IMR-90 (cell line): ENCODE measurements at regions of chr3 and their contacts with region 1.

Region 1: DNA sequence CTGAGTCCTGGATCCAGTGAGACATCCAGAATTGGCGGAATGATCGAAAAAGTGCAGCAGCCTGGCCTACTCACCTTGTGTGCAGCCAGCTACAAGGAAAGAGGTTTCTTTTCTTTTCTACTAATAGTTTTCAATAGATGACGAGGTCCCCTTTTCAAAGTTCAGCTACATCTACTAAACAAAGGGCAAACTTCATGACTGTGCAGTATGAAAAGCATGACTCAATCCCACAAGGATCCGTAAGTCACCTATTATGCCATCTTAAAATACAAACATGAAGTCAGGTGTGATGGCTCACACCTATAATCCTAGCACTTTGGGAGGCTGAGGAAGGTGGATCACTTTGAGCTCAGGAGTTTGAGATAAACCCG is 16.7 kb downstream of the MIX23 start:
- DNase-seq: peak; percentile 2
- ATAC-seq: no peak
- H3K4me3 ChIP-seq: no peak overlapping the region
- H3K27ac ChIP-seq: no peak overlapping the region
- H3K4me1 ChIP-seq: peaks cover 5% of the 10 kb centered on the region
- H3K27me3 ChIP-seq: no peaks in the 10 kb centered on the region
- CTCF ChIP-seq: no peak
- POLR2A ChIP-seq: no peak
- RAD21 ChIP-seq: no peak

Region 2: DNA sequence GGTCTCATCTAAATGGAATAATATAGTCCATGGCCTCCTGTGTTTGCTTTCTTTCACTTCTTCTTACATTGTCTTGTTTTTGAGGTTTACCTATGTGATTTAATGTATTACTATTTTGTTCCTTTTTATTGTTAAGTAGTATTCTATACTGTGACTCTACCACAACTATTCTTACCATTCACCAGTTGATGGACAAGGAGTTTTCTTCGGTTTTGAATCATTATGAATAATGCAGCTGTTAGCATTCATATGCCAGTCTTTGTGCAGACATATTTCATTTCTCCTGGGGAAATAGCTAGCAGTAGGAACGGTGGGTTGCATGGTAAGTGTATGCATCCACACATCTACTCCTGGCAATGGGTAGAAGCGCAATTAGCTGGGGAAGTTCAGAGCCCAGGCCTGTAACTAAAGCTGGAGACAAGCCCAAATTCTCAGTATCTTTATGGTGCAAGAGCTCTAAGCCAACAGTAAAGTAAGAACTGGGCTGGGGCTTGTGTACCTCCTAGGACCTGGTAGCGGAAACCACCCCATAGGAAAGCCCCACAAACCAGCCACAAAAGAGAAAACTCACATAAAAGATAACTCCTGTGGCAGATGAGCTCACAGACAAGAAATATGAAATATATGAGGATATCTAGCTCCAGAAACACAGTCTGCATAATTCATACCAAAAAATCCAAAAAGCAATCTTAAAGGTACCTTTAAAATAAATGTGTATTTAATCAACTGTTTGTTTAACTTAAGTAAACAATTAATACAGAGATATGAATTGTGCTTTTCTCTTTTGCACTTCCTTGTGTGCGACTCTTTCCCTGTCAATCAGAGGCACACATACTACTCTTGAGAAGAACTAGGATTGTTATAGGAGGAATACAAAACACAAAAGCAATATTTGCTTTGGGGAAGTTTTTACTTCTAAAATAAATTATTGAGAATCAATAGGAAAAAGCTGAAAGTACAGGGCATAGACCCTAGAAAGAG is 44.0 kb before region 1 on chr3:
- CTCF ChIA-PET with region 1: no interaction called
- POLR2A ChIA-PET with region 1: interaction called, 20 read pairs
- dilution Hi-C with region 1: no loop called
- in situ Hi-C with region 1: no loop called
- intact Hi-C with region 1: no loop called
- DNase-seq: no peak
- ATAC-seq: no peak
- H3K4me3 ChIP-seq: no peak overlapping the region
- H3K27ac ChIP-seq: no peak overlapping the region
- H3K4me1 ChIP-seq: no peaks in the 10 kb centered on the region
- H3K27me3 ChIP-seq: peaks cover 2% of the 10 kb centered on the region
- CTCF ChIP-seq: no peak
- POLR2A ChIP-seq: no peak
- RAD21 ChIP-seq: no peak